OCI-LY7 (cell line): ENCODE measurements at regions of chr17 and their contacts with region 1.

Region 1: GRCh38 chr17:49556223-49556971 is 19.3 kb upstream of the NXPH3 start:
- DNase-seq: peak; percentile 82
- H3K4me3 ChIP-seq: no peak overlapping the region
- H3K27ac ChIP-seq: no peak overlapping the region
- H3K4me1 ChIP-seq: peaks cover 3% of the 10 kb centered on the region
- CTCF ChIP-seq: peak; percentile 96

Region 2: DNA sequence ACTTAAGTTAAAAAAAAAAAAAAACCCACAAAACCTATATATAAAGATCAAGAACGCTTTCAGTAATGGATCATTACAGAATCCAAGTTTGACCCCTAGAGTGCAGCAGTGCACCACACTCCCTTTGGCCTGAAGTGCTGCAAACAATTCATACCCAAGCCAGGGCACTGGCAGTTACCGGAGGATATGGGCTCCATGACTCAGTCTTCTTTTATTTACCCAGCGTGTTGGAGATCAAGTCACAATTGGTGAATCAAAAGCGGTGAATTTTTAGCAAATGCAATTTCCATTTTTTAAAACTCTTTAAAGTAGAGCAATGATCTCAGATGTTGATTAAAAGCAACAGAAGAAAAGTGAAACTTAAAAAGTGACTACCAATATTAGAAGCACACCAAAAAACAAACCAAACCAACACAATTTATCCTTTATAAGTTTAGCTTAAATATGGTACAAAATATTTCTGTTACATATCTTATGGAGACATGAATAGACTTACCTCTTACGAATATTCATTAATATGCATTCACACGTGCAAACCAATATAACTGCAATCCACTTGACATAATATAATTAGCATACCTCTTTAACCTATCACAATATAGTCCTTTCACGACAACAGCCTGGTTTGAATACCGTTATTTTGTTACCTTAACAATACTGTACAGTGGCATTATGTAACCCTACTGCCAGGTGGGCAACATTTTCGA is 240.7 kb before region 1 on chr17:
- CTCF ChIA-PET with region 1: no interaction called
- POLR2A ChIA-PET with region 1: no interaction called
- intact Hi-C with region 1: loop called (anchors 2 kb)
- DNase-seq: peak; percentile 84
- H3K4me3 ChIP-seq: peak overlapping the region; percentile 58
- H3K27ac ChIP-seq: peak overlapping the region; percentile 55
- H3K4me1 ChIP-seq: peaks cover 28% of the 10 kb centered on the region
- CTCF ChIP-seq: peak; percentile 98

Region 3: DNA sequence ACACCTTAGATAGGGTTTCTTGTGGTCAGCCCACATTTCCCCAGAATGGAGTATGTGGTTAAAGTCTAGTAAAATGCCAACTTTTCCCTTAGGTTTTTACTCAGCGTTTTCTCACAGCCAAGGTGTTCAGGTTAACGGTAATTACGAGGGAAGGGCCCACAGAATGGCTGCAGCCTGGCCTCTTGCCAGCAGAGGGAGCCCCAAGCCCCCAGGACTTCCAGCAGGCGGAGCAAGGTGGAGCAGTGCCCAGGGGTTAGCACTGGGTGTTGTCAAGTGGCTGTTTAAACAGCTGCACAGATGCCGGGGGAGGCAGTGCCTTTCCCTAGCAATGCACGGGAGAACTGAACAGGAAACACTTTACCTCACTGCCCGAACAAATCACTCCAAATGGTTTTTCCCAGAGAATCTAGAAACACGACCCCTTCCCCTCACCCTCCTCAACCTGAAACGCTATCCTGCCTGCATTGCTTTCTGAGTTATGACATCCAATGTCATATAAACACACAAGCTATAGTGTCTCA is 148.4 kb before region 1 on chr17:
- CTCF ChIA-PET with region 1: interaction called, 4 read pairs
- POLR2A ChIA-PET with region 1: no interaction called
- intact Hi-C with region 1: loop called (anchors 1 kb)
- DNase-seq: peak; percentile 82
- H3K4me3 ChIP-seq: no peak overlapping the region
- H3K27ac ChIP-seq: no peak overlapping the region
- H3K4me1 ChIP-seq: peaks cover 18% of the 10 kb centered on the region
- CTCF ChIP-seq: peak; percentile 100

Region 4: GRCh38 chr17:49434821-49435670 is 121.4 kb before region 1 on chr17:
- CTCF ChIA-PET with region 1: interaction called, 13 read pairs
- POLR2A ChIA-PET with region 1: no interaction called
- intact Hi-C with region 1: loop called (anchors 1 kb)
- DNase-seq: peak; percentile 63
- H3K4me3 ChIP-seq: no peak overlapping the region
- H3K27ac ChIP-seq: no peak overlapping the region
- H3K4me1 ChIP-seq: peaks cover 22% of the 10 kb centered on the region
- CTCF ChIP-seq: peak; percentile 83

Region 5: GRCh38 chr17:49496183-49496866 is 60.1 kb before region 1 on chr17:
- CTCF ChIA-PET with region 1: no interaction called
- POLR2A ChIA-PET with region 1: no interaction called
- intact Hi-C with region 1: loop called (anchors 2 kb)
- DNase-seq: peak; percentile 65
- H3K4me3 ChIP-seq: peak overlapping the region; percentile 68
- H3K27ac ChIP-seq: no peak overlapping the region
- H3K4me1 ChIP-seq: peaks cover 16% of the 10 kb centered on the region
- CTCF ChIP-seq: peak; percentile 75

Region 6: DNA sequence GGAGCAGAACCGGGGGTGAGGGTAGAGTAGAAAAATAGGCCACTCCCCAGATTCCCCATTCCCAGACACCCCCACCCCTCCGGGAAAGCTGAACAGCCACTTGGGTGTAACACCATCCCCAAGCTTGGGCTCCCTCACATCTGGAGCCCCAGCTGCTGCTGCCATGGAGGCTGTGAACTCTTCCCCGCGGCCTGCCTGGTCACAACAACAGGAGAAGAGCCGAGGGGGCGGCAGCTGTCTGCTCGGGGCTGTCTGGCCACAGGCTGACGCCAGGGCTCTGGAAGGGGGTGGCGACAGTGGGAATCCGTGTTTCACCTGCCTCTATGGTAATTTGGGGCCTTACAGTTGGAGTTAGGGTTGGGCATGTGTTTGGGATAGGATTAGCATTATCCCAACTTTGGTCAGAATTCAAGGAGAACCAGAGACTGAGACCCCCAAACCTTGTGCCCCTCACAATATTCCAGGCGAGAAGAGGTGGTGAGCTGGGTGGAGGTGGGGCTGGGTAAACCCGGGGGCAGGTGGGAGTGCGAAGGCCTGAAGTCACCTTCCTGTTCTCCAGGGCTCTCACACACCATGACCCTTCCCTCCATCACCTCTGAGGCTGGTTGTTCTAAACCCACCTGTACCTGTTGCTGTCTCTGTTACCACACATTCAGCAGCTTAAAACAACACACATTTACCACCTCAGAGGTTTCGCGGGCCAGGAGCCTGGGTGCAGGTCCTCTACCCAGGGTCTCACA is 10.4 kb before region 1 on chr17:
- CTCF ChIA-PET with region 1: no interaction called
- POLR2A ChIA-PET with region 1: no interaction called
- intact Hi-C with region 1: no loop called
- DNase-seq: no peak
- H3K4me3 ChIP-seq: no peak overlapping the region
- H3K27ac ChIP-seq: no peak overlapping the region
- H3K4me1 ChIP-seq: no peaks in the 10 kb centered on the region
- CTCF ChIP-seq: no peak

Region 7: DNA sequence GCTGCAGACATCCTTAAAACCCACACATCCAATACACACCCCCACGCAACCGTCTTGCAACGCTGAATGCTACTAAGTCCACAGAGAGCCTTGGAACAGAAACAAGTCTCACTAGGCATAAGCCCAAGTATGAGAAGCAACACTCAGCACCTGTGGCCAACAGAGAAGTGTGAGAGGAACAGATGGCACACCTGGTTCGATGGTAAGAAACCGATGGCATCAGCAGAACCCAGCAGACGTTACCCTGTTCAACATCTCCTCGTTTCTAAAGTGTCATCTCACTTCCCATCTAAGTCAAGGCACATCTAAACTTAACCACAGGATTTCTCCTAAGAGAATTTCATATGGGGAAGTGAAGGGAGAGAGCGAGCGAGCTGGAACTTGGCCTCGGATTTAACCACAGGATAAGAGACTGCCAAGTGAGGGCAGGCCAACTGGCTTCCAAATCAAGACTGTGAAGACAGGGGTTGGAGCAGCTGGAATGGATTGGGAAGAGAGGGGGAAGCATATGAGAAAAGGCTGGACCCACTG is 60.3 kb after region 1 on chr17:
- CTCF ChIA-PET with region 1: no interaction called
- POLR2A ChIA-PET with region 1: no interaction called
- intact Hi-C with region 1: no loop called
- DNase-seq: no peak
- H3K4me3 ChIP-seq: no peak overlapping the region
- H3K27ac ChIP-seq: no peak overlapping the region
- H3K4me1 ChIP-seq: no peaks in the 10 kb centered on the region
- CTCF ChIP-seq: no peak